Left ventricle myocardium inferior (tissue), 1 donor: ENCODE measurements at regions of chr1 and their contacts with region 1.

Region 1: GRCh38 chr1:211698161-211699026 is 23.0 kb upstream of the NEK2 start:
- DNase-seq: peak; percentile 75
- H3K4me3 ChIP-seq: peak overlapping the region; percentile 34
- H3K27ac ChIP-seq: no peak overlapping the region
- H3K4me1 ChIP-seq: peaks cover 11% of the 10 kb centered on the region
- H3K27me3 ChIP-seq: peaks cover 7% of the 10 kb centered on the region
- CTCF ChIP-seq: peak; percentile 97

Region 2: DNA sequence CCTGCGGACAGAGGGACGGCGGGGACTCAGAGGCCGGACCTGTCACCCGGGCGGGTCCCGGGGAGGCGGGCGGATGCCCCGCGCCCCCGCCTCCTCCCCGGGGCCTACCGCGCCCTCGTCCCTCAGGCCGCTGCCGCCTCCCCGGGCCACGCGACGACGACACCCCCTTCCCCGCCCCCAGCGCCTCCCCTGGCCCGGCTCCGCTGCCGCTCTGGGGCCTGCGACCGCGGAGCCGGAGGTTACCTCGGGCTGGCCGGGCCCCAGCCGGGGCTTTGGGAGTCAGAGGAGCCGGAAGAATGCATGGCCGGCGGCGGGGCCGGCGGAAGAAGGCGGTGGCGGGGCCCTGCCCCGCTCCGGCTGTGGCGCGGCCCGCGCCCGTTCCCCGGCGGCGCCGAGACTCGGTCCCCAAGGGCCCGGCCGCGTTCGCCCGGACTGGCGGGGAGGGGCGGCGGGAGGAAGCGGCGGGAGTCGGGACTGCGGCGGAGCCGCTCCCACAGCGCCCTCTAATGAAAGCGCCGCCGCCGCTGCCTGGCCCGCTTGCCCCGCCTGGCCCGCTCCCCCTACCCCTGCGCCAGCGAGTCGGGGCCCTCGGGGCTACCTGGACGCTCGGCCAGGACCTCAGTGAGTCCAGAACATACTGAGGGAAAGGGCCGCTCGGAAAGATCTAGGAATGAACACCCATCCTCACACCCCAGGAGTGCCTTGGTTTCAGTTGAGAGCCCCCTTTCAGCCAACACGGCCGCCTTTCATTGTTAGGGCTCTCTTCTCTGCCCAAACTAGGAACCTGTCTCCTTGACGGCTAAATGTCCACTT is 132.1 kb after region 1 on chr1 and contains the start of gene LPGAT1:
- intact Hi-C with region 1: loop called (anchors 5 kb)
- DNase-seq: peak; percentile 83
- H3K4me3 ChIP-seq: peak within 1 kb of the TSS; percentile 81
- H3K27ac ChIP-seq: peak within 1 kb of the TSS; percentile 94
- H3K4me1 ChIP-seq: peaks cover 40% of the 10 kb centered on the region
- H3K27me3 ChIP-seq: no peaks in the 10 kb centered on the region
- CTCF ChIP-seq: peak; percentile 83
- total RNA-seq, gene LPGAT1: 24.9 TPM